ENCODE measurements at regions of chr6 and their contacts with region 1.

Region 1: DNA sequence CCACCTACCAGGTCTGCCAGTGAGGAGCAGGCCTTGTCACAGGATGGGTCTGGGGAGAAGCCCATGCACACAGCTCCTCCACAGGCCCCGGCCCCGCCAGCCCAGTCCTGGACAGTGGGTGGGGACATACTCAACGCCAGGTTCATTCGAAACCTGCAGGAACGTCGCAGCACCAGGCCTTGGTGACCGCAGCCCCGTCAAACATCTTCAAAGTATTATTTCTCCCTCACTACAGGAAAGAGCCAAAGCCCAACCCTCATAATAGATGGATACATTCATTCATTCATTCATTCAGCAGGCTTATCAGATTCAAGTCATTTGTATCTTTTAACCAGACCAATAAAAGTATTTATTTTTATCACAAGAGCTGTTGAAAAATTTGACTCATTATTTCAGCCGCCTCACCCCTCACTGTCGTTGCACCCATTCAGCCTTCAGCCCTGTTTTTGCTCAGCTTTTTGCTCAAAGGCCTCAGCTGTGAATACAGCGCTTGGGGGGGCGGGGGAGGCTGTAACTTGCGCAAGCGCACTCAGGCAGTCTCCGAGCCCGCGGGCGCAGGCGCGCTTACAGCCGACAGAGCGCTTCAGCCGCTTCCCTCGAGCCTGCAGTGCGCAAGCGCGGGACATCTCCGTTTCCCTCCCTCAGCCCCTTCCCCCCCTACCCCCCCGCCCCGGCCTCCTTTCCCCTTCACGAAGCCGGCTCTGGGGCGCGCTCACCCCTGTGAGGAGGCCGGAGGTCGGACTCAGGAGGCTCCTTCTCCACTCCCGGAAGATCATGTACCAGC is at the start of gene C6orf136:
- DNase-seq: peak; percentile 89
- H3K4me3 Mint-ChIP-seq: peak within 1 kb of the TSS; percentile 88
- H3K27ac Mint-ChIP-seq: peak within 1 kb of the TSS; percentile 89
- H3K4me1 Mint-ChIP-seq: peaks cover 18% of the 10 kb centered on the region
- H3K27me3 Mint-ChIP-seq: no peaks in the 10 kb centered on the region
- total RNA-seq, gene C6orf136: 23.1 and 28.2 TPM in 2 replicates

Region 2: DNA sequence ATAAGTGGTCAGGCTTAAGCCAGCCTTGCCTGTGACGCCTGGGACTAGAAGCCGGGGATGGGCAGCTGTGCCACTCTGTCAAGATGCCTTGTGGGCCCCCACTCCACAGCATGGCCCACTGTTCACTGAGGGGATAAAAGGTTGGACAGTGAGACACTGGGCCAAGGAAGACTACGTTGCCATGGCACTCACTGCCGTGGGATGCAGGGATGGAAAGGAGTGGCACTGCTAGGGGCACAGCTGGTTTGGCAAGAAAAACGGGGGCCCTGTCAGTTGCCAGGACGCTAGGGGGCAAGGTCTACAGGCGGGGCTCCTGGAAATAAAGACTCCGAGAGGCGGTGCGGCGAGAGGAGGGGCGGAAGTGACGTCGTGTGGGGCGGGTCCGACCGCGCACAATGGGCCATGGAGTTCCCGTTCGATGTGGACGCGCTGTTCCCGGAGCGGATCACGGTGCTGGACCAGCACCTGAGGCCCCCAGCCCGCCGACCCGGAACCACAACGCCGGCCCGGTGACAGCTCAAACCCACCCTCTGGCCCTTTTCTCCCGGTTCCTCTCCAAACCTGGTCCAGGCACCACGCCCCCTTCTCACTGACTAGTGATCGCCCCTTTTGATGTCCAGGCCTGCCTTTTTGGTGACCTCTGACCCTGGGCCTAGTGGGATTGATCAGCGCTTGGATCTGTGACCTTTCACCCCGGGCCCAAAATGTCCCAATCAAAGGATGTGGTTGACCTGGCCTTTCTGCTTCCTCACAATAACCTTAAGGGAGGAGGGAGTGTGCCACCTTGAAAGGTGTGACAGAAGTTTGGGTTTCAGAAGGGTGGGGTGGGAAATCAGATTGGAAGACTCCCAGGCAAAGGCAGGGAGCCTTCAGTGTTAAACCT is 19.9 kb before region 1 on chr6 and contains the start of gene ATAT1:
- intact Hi-C with region 1: loop called (anchors 1 kb)
- DNase-seq: peak; percentile 83
- H3K4me3 Mint-ChIP-seq: peak within 1 kb of the TSS; percentile 96
- H3K27ac Mint-ChIP-seq: peak within 1 kb of the TSS; percentile 98
- H3K4me1 Mint-ChIP-seq: peaks cover 26% of the 10 kb centered on the region
- H3K27me3 Mint-ChIP-seq: no peaks in the 10 kb centered on the region
- total RNA-seq, gene ATAT1: 11.8 and 13.9 TPM in 2 replicates

Region 3: GRCh38 chr6:30672445-30673253 is 26.0 kb after region 1 on chr6 and contains the start of gene DHX16:
- intact Hi-C with region 1: loop called (anchors 1 kb)
- DNase-seq: peak; percentile 87
- H3K4me3 Mint-ChIP-seq: peak within 1 kb of the TSS; percentile 91
- H3K27ac Mint-ChIP-seq: peak within 1 kb of the TSS; percentile 68
- H3K4me1 Mint-ChIP-seq: peaks cover 20% of the 10 kb centered on the region
- H3K27me3 Mint-ChIP-seq: no peaks in the 10 kb centered on the region
- total RNA-seq, gene DHX16: 48.4 and 48.5 TPM in 2 replicates